ENCODE measurements at regions of chr12 and their contacts with region 1.

Region 1: DNA sequence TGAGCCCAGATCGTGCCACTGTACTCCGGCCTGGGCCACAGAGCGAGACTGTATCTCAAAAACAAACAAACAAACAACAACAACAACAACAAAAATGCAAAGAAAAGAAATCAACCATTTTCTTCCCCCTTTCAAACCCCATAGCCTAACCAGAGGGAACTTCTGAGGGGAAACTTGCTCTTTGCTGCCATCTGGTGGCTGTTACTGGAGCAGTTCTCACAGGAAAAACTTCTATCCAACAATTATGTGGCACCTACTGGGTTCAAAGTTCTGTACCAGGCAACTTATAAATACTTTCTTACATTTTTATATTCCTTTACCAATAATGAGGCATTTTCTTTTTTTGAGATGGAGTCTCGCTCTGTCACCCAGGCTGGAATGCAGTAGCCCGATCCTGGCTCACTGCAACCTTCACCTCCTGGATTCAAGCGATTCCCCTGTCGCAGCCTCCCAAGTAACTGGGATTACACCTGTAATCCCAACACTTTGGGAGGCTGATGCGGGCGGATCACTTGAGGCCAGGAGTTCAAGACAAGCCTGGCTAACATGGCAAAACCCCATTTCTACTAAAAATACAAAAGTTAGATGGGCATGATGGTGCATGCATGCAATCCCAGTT is 50.9 kb upstream of the BICDL1 start:
- DNase-seq: peak in 1 of 2 experiments; percentile 53
- H3K4me3 ChIP-seq: no peak overlapping the region
- H3K27ac ChIP-seq: no peak overlapping the region
- H3K4me1 ChIP-seq: peaks cover 7% of the 10 kb centered on the region
- H3K27me3 ChIP-seq: no peaks in the 10 kb centered on the region
- CTCF ChIP-seq: peak; percentile 81

Region 2: DNA sequence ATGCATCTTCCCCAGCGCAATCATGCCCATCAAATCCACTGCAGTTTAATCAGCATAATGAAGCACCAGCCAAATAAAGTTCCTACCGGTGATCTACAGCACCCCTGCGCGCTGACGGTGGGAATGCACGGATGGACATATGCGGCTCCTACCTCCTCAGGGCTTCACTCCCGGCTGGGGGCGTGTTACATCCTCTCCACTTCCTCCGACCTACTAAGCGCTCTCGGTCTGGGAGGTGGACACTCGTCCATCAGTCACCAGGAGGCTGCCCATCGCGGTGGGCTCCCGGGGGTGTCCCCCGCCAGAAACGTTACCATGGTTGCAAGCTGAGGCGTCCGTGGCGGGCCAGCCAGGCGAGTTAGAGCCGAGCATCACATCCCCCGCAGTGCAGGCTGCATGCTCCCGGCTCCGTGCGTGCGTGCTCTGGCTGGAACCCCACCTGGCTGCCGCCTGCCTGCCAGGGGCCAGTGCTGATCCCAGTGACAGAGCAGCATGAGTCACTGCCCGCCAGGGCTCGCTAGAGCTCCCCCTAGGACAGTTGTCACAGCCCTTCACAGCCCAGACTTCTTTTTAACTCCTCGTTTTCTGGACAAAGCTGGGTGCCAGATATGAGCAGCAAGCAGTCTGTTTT is 134.0 kb before region 1 on chr12:
- CTCF ChIA-PET with region 1: no interaction called
- POLR2A ChIA-PET with region 1: no interaction called
- intact Hi-C with region 1: loop called (anchors 1 kb)
- DNase-seq: peak in 1 of 2 experiments; percentile 47
- H3K4me3 ChIP-seq: no peak overlapping the region
- H3K27ac ChIP-seq: no peak overlapping the region
- H3K4me1 ChIP-seq: no peaks in the 10 kb centered on the region
- H3K27me3 ChIP-seq: no peaks in the 10 kb centered on the region
- CTCF ChIP-seq: peak; percentile 39; the same call in 1 of the 2 replicates

Region 3: GRCh38 chr12:119876761-119877638 is 61.2 kb before region 1 on chr12 and contains the start of gene CIT:
- CTCF ChIA-PET with region 1: no interaction called
- POLR2A ChIA-PET with region 1: no interaction called
- intact Hi-C with region 1: loop called (anchors 2 kb)
- DNase-seq: peak; percentile 80 to 87
- H3K4me3 ChIP-seq: peak within 1 kb of the TSS; percentile 91
- H3K27ac ChIP-seq: no peak within 1 kb of the TSS
- H3K4me1 ChIP-seq: peaks cover 10% of the 10 kb centered on the region; the same call in 1 of the 2 replicates
- H3K27me3 ChIP-seq: no peaks in the 10 kb centered on the region
- CTCF ChIP-seq: no peak
- total RNA-seq, gene CIT: 73.9 and 81.8 TPM in 2 replicates

Region 4: GRCh38 chr12:119902084-119902509 is 36.1 kb before region 1 on chr12:
- CTCF ChIA-PET with region 1: no interaction called
- POLR2A ChIA-PET with region 1: no interaction called
- intact Hi-C with region 1: loop called (anchors 2 kb)
- DNase-seq: peak; percentile 68 to 69
- H3K4me3 ChIP-seq: no peak overlapping the region
- H3K27ac ChIP-seq: no peak overlapping the region
- H3K4me1 ChIP-seq: no peaks in the 10 kb centered on the region
- H3K27me3 ChIP-seq: no peaks in the 10 kb centered on the region
- CTCF ChIP-seq: peak; percentile 67

Region 5: GRCh38 chr12:119988782-119989668 is 50.9 kb after region 1 on chr12 and contains the start of gene BICDL1:
- CTCF ChIA-PET with region 1: no interaction called
- POLR2A ChIA-PET with region 1: interaction called, 3 read pairs
- intact Hi-C with region 1: loop called (anchors 1 kb)
- DNase-seq: peak; percentile 82 to 96
- H3K4me3 ChIP-seq: peak within 1 kb of the TSS; percentile 68
- H3K27ac ChIP-seq: peak within 1 kb of the TSS; percentile 27
- H3K4me1 ChIP-seq: peaks cover 21% of the 10 kb centered on the region
- H3K27me3 ChIP-seq: no peaks in the 10 kb centered on the region
- CTCF ChIP-seq: peak; percentile 1; the same call in 1 of the 2 replicates
- total RNA-seq, gene BICDL1: 14.4 and 18.6 TPM in 2 replicates

Region 6: GRCh38 chr12:120079411-120080026 is 141.4 kb after region 1 on chr12:
- CTCF ChIA-PET with region 1: no interaction called
- POLR2A ChIA-PET with region 1: no interaction called
- intact Hi-C with region 1: loop called (anchors 2 kb)
- DNase-seq: peak; percentile 71 to 92
- H3K4me3 ChIP-seq: peak overlapping the region; percentile 23; the same call in 1 of the 2 replicates
- H3K27ac ChIP-seq: peak overlapping the region; percentile 98
- H3K4me1 ChIP-seq: peaks cover 42% of the 10 kb centered on the region
- H3K27me3 ChIP-seq: no peaks in the 10 kb centered on the region
- CTCF ChIP-seq: no peak

Region 7: DNA sequence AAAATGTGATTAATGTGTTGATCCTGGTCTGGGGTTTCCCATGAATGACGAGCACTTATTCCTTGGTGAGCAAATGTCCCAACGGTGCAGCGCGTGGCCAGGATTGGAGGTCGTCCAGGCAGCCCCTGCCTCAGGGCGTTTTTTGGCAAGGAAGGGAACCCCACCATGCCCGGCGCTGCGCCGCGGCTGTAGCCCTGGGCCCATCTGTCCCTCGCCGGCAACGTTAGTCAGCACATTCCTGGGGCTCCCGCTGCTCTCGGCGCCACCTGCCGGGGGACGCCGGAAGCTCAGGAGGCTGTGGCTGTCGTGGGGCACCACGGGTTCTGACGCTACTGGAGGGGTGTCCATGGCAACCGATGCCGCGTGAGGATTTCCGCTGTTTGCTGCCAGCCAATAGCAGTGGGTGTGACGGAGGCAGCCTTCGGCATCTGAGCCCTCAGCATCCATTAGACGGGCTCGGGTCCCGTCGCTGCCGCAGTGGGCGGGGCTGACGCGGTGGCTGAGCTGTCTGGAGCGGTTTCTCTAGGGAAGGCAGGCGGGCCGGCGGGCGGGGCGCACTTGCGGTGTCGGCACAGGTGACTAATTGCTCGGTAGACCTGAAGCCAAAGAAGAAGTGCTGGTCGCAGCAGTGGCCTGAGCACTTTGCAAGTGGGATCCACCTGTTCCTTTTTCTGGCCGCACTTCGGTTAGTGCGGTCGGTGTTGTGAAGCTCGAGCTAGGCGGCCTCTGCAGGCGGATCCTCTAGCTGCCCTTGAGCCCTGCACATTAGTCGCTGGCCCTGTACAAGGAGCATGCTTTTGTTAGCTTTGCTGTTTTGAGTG is 148.9 kb after region 1 on chr12:
- CTCF ChIA-PET with region 1: no interaction called
- POLR2A ChIA-PET with region 1: no interaction called
- intact Hi-C with region 1: loop called (anchors 1 kb)
- DNase-seq: peak; percentile 91 to 98
- H3K4me3 ChIP-seq: peak overlapping the region; percentile 45; the same call in 1 of the 2 replicates
- H3K27ac ChIP-seq: peak overlapping the region; percentile 76
- H3K4me1 ChIP-seq: peaks cover 22% of the 10 kb centered on the region
- H3K27me3 ChIP-seq: no peaks in the 10 kb centered on the region
- CTCF ChIP-seq: peak; percentile 84

Region 8: GRCh38 chr12:121888478-121889266 is 1950.5 kb after region 1 on chr12 and contains the start of gene PSMD9:
- CTCF ChIA-PET with region 1: no interaction called
- POLR2A ChIA-PET with region 1: no interaction called
- intact Hi-C with region 1: no loop called
- DNase-seq: peak; percentile 89 to 98
- H3K4me3 ChIP-seq: peak within 1 kb of the TSS; percentile 73
- H3K27ac ChIP-seq: peak within 1 kb of the TSS; percentile 72
- H3K4me1 ChIP-seq: peaks cover 26% of the 10 kb centered on the region
- H3K27me3 ChIP-seq: no peaks in the 10 kb centered on the region
- CTCF ChIP-seq: peak; percentile 63
- total RNA-seq, gene PSMD9: 64.8 and 76.6 TPM in 2 replicates